Left lung (tissue), 14 donors: ENCODE measurements at regions of chr2 and their contacts with region 1.

Region 1: GRCh38 chr2:42095923-42096408 is 48.1 kb downstream of the PKDCC start:
- DNase-seq: peak in 3 of 4 donors; percentile 75 to 84 (median 76)
- ATAC-seq: peak; percentile 66
- H3K4me3 ChIP-seq: no peak overlapping the region
- H3K27ac ChIP-seq: no peak overlapping the region
- H3K4me1 ChIP-seq: peaks cover 12 to 65% of the 10 kb centered on the region in 2 donors
- H3K27me3 ChIP-seq: no peaks in the 10 kb centered on the region
- CTCF ChIP-seq: peak; percentile 72

Region 2: DNA sequence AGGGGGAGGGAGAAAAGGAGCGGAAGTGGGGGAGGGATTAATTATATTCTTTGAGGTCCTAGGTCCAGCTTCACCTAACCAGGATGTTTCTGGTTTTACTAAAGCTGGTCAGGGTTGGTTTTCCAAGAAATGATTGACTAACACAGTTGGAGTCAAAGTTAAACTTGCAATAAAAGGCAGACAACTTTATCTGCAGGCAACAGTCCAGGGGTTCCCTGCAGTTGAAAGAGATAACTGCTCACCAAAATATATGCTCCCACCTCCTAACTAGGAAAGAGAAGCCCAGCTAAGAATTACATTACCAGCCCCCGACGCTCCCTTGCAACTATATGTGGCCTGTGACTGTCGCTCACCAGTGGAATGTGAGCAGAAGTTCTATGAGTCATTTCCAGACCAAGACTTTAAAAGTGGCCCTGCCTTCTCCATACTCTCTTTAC is 188.2 kb before region 1 on chr2:
- intact Hi-C with region 1: no loop called
- DNase-seq: no peak
- ATAC-seq: no peak
- H3K4me3 ChIP-seq: no peak overlapping the region
- H3K27ac ChIP-seq: no peak overlapping the region
- H3K4me1 ChIP-seq: peaks cover 0 to 4% of the 10 kb centered on the region in 2 donors
- H3K27me3 ChIP-seq: no peaks in the 10 kb centered on the region
- CTCF ChIP-seq: no peak

Region 3: DNA sequence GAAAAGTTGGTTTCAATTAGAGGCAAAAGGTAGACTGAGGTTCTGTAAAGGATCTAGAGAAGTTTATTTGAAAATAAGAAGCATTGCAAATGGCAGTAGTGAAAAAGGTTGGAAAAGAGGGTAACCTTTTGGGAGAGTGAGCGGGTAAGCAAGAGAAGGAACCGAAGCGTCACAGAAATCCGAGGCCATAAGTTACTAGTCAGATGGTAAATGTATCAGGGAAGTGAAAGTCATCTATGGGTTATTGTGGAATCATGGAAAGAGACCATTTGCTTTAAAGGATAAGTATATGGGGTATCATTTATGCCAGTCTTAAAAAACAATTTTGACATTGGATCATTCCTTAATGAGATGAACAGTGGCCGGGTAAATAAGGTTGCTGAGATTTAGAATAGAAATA is 103.7 kb after region 1 on chr2:
- intact Hi-C with region 1: loop called in 1 of 2 experiments (anchors 5 kb)
- DNase-seq: no peak
- ATAC-seq: no peak
- H3K4me3 ChIP-seq: no peak overlapping the region
- H3K27ac ChIP-seq: no peak overlapping the region
- H3K4me1 ChIP-seq: peaks cover 6 to 60% of the 10 kb centered on the region in 2 donors
- H3K27me3 ChIP-seq: no peaks in the 10 kb centered on the region
- CTCF ChIP-seq: no peak

Region 4: DNA sequence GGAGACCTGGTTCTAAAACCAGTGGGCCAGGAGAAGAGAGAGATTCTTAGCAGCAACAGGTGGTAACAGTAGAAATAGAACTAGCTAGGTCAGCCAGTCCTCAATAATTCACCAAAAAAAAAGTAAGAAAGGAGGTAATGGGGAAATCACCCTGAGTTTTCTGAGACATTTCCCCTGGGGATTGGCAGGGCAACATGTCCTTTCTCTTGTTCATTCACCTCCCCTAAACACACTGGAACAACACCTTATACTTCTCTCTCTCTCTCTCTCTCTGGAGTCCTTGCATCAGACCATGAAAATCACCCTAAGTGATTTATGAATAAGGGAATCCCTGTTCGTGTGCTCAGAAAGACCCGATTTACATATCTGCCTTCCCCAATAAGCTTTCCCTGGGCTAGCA is 200.3 kb after region 1 on chr2:
- intact Hi-C with region 1: no loop called
- DNase-seq: no peak
- ATAC-seq: no peak
- H3K4me3 ChIP-seq: no peak overlapping the region
- H3K27ac ChIP-seq: no peak overlapping the region
- H3K4me1 ChIP-seq: peaks cover 0 to 2% of the 10 kb centered on the region in 2 donors
- H3K27me3 ChIP-seq: no peaks in the 10 kb centered on the region
- CTCF ChIP-seq: no peak

Region 5: DNA sequence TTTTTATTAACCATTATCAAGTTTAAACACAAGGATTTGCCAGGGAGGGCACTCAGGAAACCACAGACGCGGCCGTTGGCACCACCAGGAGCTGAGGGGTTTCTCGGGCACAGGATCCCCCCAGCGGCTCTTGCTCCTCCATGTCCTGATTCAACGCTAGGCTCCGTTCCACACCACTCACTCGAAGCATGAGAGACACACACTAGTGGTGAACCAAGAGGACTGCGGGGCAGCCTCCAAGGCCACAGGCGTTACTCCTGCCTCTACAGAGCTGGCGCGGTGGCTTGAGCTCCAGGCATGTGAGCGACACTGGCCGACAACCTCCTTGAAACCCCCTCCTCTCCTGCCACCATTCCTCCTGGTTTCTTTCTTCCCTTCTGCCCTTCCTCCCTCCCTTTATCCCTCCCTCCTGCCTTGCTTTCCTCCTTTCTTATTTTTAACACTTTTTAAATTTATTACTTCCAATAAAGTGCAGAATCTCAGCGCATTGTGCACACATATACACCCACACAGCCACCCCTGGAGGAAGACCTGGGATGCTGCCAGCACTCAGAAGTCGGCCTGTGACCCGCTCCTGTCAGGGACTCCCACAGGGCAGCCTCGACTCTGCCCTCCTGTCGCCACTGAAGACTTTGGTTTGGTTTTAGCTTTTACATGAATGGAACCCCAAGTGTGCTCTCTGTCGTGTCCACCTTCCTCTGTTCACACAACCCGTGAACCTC is 243.4 kb after region 1 on chr2:
- intact Hi-C with region 1: loop called in 1 of 2 experiments (anchors 10 kb)
- DNase-seq: no peak
- ATAC-seq: peak; percentile 13
- H3K4me3 ChIP-seq: no peak overlapping the region
- H3K27ac ChIP-seq: no peak overlapping the region
- H3K4me1 ChIP-seq: peaks cover 0 to 14% of the 10 kb centered on the region in 2 donors
- H3K27me3 ChIP-seq: no peaks in the 10 kb centered on the region
- CTCF ChIP-seq: no peak